Heart right ventricle (tissue), 16 donors: ENCODE measurements at regions of chr3 and their contacts with region 1.

Region 1: GRCh38 chr3:135260025-135260424 is 465.0 kb downstream of the EPHB1 start:
- DNase-seq: no peak
- ATAC-seq: no peak
- H3K4me3 ChIP-seq: no peak overlapping the region
- H3K27ac ChIP-seq: no peak overlapping the region
- H3K4me1 ChIP-seq: no peaks in the 10 kb centered on the region
- H3K27me3 ChIP-seq: no peaks in the 10 kb centered on the region
- CTCF ChIP-seq: no peak

Region 2: DNA sequence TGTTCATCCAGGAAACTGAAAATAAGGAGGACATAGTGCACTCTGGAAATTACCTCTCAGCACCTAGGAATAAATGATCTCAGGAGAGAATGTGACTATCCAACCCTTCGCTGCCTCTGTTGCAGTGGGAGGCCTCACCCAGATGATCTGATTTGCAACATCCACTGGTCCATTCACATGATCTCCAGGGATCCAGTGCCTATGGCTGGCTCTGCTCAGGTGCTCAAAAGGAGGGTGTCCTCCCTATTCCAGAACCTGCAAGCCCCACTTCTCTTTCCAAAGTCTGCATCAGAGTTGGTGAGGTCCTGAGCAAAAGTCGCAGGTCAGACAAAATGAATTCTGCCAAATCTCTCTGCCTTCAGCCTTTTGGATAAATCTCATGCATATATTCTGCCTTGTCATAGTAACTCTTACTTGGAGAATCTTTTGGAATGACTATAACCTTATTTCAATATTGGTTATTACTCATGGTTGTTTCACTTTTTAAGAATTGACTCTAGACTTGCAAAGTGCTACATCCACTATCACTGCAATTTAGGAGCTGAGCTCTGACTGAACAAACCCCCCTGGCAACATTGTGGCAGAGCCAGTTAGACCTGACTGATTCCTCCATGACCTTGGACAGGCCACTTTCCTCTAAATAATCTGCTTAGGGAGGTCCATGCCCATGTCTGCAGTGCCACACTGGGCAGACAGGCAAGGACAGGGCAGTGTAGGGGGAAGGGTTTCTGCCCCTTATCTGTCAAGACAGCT is 169.8 kb before region 1 on chr3:
- intact Hi-C with region 1: no loop called
- DNase-seq: no peak
- ATAC-seq: peak in 1 of 8 donors; percentile 41
- H3K4me3 ChIP-seq: no peak overlapping the region
- H3K27ac ChIP-seq: no peak overlapping the region
- H3K4me1 ChIP-seq: no peaks in the 10 kb centered on the region
- H3K27me3 ChIP-seq: peaks cover 0 to 5% (median 0%) of the 10 kb centered on the region in 7 donors
- CTCF ChIP-seq: no peak

Region 3: DNA sequence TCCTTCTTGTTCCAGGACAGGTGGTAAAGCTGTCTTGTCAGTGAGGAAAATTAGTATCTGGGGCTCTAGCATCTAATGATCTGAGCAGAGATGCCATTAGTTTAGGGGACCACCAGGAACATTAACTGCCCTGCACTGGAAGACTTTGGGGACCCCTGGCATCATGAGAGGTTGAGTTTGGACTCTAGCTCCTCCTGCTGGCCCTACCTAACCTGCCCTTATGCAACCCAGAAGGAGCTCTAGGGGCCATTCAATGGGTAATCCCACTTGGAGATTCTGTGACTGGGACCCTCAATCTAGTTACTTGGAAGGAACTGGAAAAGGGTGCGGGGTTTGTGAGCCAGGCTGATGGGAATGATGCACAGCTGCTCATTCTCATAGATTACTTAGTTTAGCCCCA is 14.0 kb before region 1 on chr3:
- intact Hi-C with region 1: loop called in 1 of 10 experiments (anchors 1 kb)
- DNase-seq: no peak
- ATAC-seq: no peak
- H3K4me3 ChIP-seq: no peak overlapping the region
- H3K27ac ChIP-seq: no peak overlapping the region
- H3K4me1 ChIP-seq: no peaks in the 10 kb centered on the region
- H3K27me3 ChIP-seq: peaks cover 0 to 4% (median 0%) of the 10 kb centered on the region in 7 donors
- CTCF ChIP-seq: peak in 2 of 9 donors; percentile 14 to 22